ENCODE measurements at regions of chr6 and their contacts with region 1.

Region 1: DNA sequence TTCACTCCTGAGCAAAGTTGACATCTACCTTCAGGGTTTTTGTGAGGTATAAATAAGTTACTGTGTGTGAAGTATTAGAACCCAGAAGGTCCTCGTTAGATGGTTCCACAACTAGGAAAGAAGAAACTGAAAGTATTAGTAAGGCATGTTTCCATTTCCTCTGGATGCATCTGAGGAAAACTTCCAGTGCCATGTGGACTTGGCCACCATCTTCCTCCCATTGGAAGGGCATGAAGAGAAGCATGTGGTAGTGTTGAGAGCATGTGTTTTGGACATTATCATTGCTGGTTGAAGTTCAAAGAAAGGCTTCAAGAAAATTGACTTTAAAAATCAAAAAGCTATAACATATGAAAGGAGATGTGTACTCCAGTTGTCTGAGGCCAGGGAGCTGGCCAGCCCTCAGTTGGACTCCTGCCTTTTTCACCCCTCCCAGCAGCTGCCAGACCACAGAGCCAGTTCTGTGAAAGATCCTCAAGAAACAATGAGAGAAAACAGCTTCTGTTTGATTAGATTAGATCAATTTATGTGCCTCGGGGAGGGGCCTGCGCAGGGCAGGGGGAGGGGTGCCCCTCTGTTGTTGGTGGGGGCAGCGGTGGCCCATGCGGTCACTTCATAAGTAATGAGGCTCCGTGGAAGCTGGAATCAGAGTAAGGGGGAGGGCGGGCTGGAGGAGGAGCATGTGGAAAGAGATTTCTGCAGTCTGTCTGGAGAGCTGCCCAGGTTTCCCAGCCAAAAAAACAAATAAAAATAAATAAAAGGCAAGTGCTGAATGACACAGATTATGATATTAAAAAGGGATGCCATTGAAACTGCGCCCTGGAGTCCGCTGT is 154.0 kb downstream of the JARID2 start:
- DNase-seq: no peak
- ATAC-seq: no peak
- H3K4me3 ChIP-seq: no peak overlapping the region
- H3K4me3 Mint-ChIP-seq: peak overlapping the region; percentile 87
- H3K27ac ChIP-seq: no peak overlapping the region
- H3K27ac Mint-ChIP-seq: peak overlapping the region; percentile 22
- H3K4me1 ChIP-seq: peaks cover 52% of the 10 kb centered on the region
- H3K4me1 Mint-ChIP-seq: peaks cover 72% of the 10 kb centered on the region
- H3K27me3 ChIP-seq: no peaks in the 10 kb centered on the region
- H3K27me3 Mint-ChIP-seq: no peaks in the 10 kb centered on the region
- CTCF ChIP-seq: no peak

Region 2: GRCh38 chr6:14464055-14464454 is 935.8 kb before region 1 on chr6:
- CTCF ChIA-PET with region 1: no interaction called
- POLR2A ChIA-PET with region 1: no interaction called
- intact Hi-C with region 1: no loop called
- DNase-seq: no peak
- ATAC-seq: no peak
- H3K4me3 ChIP-seq: no peak overlapping the region
- H3K4me3 Mint-ChIP-seq: no peak overlapping the region
- H3K27ac ChIP-seq: no peak overlapping the region
- H3K27ac Mint-ChIP-seq: no peak overlapping the region
- H3K4me1 ChIP-seq: no peaks in the 10 kb centered on the region
- H3K4me1 Mint-ChIP-seq: peaks cover 3% of the 10 kb centered on the region
- H3K27me3 ChIP-seq: no peaks in the 10 kb centered on the region
- H3K27me3 Mint-ChIP-seq: peaks cover 3% of the 10 kb centered on the region
- CTCF ChIP-seq: no peak

Region 3: DNA sequence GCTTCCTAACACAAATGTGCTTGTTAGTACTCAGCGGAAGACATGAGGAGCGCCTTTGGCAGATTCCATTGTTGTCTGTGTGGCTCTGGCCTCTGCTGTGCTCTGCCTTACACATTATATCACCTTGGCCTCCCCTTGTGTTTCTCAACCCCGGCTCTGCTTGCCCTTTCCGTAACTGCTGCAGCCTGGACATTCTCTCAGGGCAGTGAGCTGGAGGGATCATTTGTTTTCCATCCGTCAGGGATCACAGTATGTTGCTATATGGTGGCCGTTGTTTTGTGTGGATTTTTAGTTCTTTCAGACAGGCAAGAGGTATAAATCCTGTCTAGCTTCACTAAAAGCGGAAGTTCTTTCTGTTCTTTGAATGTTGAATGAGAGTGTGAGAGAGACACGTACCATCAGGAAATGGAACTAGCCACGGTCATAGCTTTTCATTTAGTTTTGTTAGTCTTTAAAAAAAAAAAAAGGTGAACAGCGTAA is 21.1 kb after region 1 on chr6:
- CTCF ChIA-PET with region 1: interaction called, 3 read pairs
- POLR2A ChIA-PET with region 1: interaction called, 13 read pairs
- intact Hi-C with region 1: no loop called
- DNase-seq: peak in 1 of 9 experiments; percentile 50
- ATAC-seq: peak; percentile 53
- H3K4me3 ChIP-seq: no peak overlapping the region
- H3K4me3 Mint-ChIP-seq: peak overlapping the region; percentile 38
- H3K27ac ChIP-seq: peak overlapping the region in 1 of 2 experiments; percentile 31
- H3K27ac Mint-ChIP-seq: peak overlapping the region; percentile 84
- H3K4me1 ChIP-seq: peaks cover 32% of the 10 kb centered on the region
- H3K4me1 Mint-ChIP-seq: peaks cover 48% of the 10 kb centered on the region
- H3K27me3 ChIP-seq: no peaks in the 10 kb centered on the region
- H3K27me3 Mint-ChIP-seq: no peaks in the 10 kb centered on the region
- CTCF ChIP-seq: no peak